ENCODE measurements at regions of chr2 and their contacts with region 1.

Region 1: GRCh38 chr2:170873035-170873692 is 55.9 kb upstream of the GORASP2 start:
- DNase-seq: peak; percentile 59
- ATAC-seq: peak; percentile 95
- H3K4me3 ChIP-seq: peak overlapping the region; percentile 24
- H3K27ac ChIP-seq: no peak overlapping the region
- H3K4me1 ChIP-seq: no peaks in the 10 kb centered on the region
- H3K27me3 ChIP-seq: peaks cover 2% of the 10 kb centered on the region; the same call in 1 of the 2 replicates
- CTCF ChIP-seq: peak; percentile 79
- POLR2A ChIP-seq: no peak
- RAD21 ChIP-seq: peak; percentile 51

Region 2: GRCh38 chr2:170235860-170236679 is 637.1 kb before region 1 on chr2:
- CTCF ChIA-PET with region 1: interaction called, 3 read pairs
- POLR2A ChIA-PET with region 1: no interaction called
- dilution Hi-C with region 1: no loop called
- in situ Hi-C with region 1: no loop called
- intact Hi-C with region 1: loop called (anchors 1 kb)
- DNase-seq: peak; percentile 54
- ATAC-seq: peak; percentile 69; the same call in 1 of the 2 replicates
- H3K4me3 ChIP-seq: no peak overlapping the region
- H3K27ac ChIP-seq: no peak overlapping the region
- H3K4me1 ChIP-seq: no peaks in the 10 kb centered on the region
- H3K27me3 ChIP-seq: peaks cover 14% of the 10 kb centered on the region
- CTCF ChIP-seq: peak; percentile 61
- POLR2A ChIP-seq: no peak
- RAD21 ChIP-seq: peak; percentile 64

Region 3: GRCh38 chr2:170324640-170325046 is 548.5 kb before region 1 on chr2:
- CTCF ChIA-PET with region 1: interaction called, 4 read pairs
- POLR2A ChIA-PET with region 1: no interaction called
- dilution Hi-C with region 1: no loop called
- in situ Hi-C with region 1: no loop called
- intact Hi-C with region 1: loop called (anchors 1 kb)
- DNase-seq: peak; percentile 37
- ATAC-seq: peak; percentile 85
- H3K4me3 ChIP-seq: no peak overlapping the region
- H3K27ac ChIP-seq: no peak overlapping the region
- H3K4me1 ChIP-seq: no peaks in the 10 kb centered on the region
- H3K27me3 ChIP-seq: peaks cover 2% of the 10 kb centered on the region; the same call in 1 of the 2 replicates
- CTCF ChIP-seq: peak; percentile 60
- POLR2A ChIP-seq: no peak
- RAD21 ChIP-seq: peak; percentile 56

Region 4: DNA sequence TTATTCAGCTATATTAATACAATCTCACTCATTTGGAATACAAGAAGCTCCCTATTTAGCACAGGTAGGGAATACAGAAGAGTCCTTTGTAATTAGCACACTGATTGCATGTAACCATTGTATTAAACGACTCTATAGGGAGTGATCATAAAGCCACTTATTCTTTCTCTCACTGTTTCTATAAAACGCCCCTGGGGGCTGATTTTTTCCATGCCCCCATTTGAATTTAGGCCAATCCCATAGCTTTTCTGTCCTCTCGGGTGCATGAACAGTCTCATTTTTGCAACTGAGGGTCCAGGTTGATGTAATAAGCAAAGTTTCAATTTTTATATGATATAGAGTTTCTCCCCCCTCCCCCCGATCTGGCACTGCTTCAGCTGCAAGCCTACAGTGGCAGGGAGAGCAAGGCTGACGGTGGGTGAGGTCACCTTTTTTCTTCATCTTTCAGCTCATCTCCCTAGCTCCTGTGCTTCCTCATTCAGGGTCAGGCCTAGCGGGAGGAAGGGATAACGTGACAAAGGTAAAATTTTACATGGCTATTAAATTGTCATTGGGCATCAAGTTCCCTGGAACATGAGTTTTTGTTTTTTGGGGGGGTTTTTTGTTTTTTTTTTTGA is 10.8 kb before region 1 on chr2:
- CTCF ChIA-PET with region 1: interaction called, 13 read pairs
- POLR2A ChIA-PET with region 1: no interaction called
- dilution Hi-C with region 1: no loop called
- in situ Hi-C with region 1: no loop called
- intact Hi-C with region 1: no loop called
- DNase-seq: no peak
- ATAC-seq: no peak
- H3K4me3 ChIP-seq: no peak overlapping the region
- H3K27ac ChIP-seq: no peak overlapping the region
- H3K4me1 ChIP-seq: no peaks in the 10 kb centered on the region
- H3K27me3 ChIP-seq: no peaks in the 10 kb centered on the region
- CTCF ChIP-seq: no peak
- POLR2A ChIP-seq: no peak
- RAD21 ChIP-seq: no peak

Measured in IMR-90 (cell line).